Activated CD4-positive, alpha-beta memory T cell treated with anti-CD3 and anti-CD28 coated beads for 36 hours (primary cell): ENCODE measurements at regions of chr5 and their contacts with region 1.

Region 1: GRCh38 chr5:131536211-131536826 is 98.7 kb downstream of the RAPGEF6 start:
- DNase-seq: no peak
- H3K4me3 Mint-ChIP-seq: peak overlapping the region; percentile 31
- H3K27ac Mint-ChIP-seq: peak overlapping the region; percentile 55
- H3K4me1 Mint-ChIP-seq: peaks cover 85% of the 10 kb centered on the region
- H3K27me3 Mint-ChIP-seq: no peaks in the 10 kb centered on the region

Region 2: DNA sequence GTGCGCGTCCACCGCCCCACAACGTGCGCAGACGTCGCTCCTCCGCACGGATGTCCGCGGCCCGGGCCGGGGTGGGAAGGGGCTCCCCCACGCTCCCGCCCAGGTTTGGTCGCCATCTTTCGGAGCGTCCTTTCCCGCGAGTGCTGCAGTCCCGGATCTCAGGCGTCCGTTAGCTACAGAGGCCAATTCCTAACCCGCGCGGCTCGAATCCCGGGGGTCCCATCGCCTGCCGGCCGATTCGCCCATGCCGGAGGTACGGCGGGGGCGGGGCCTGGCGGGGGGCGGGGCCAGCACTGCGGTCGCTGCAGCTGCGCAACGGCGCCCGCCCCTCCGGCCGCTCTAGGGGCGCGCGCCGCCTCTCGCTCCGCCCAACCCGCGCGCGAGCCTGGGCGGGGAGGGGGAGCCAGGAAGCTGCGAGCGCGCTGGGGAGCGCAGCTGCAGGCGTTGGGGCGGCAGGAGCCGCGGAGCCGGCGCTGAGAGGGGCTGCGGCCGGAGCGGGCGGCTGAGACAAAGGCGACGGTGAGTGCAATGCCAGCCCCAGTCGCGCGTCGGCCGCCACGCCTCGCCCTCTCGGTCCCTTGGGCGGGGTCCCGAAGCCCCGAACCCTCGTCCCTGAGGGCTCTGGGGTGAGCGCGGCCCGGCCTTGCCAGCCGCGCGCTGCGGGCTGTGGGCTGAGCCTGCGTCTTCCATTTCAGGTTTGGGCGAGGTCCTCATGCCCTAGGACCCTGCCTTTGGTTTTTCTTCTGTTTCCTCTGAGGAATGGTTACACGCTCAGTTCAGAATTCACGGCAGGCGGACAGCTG is 272.5 kb before region 1 on chr5 and contains the start of gene CDC42SE2:
- CTCF ChIA-PET with region 1: interaction called, 3 read pairs
- POLR2A ChIA-PET with region 1: no interaction called
- intact Hi-C with region 1: loop called (anchors 2 kb)
- DNase-seq: peak; percentile 88
- H3K4me3 Mint-ChIP-seq: peak within 1 kb of the TSS; percentile 89
- H3K27ac Mint-ChIP-seq: peak within 1 kb of the TSS; percentile 95
- H3K4me1 Mint-ChIP-seq: peaks cover 48% of the 10 kb centered on the region
- H3K27me3 Mint-ChIP-seq: no peaks in the 10 kb centered on the region
- total RNA-seq, gene CDC42SE2: 103 to 104 TPM

Region 3: DNA sequence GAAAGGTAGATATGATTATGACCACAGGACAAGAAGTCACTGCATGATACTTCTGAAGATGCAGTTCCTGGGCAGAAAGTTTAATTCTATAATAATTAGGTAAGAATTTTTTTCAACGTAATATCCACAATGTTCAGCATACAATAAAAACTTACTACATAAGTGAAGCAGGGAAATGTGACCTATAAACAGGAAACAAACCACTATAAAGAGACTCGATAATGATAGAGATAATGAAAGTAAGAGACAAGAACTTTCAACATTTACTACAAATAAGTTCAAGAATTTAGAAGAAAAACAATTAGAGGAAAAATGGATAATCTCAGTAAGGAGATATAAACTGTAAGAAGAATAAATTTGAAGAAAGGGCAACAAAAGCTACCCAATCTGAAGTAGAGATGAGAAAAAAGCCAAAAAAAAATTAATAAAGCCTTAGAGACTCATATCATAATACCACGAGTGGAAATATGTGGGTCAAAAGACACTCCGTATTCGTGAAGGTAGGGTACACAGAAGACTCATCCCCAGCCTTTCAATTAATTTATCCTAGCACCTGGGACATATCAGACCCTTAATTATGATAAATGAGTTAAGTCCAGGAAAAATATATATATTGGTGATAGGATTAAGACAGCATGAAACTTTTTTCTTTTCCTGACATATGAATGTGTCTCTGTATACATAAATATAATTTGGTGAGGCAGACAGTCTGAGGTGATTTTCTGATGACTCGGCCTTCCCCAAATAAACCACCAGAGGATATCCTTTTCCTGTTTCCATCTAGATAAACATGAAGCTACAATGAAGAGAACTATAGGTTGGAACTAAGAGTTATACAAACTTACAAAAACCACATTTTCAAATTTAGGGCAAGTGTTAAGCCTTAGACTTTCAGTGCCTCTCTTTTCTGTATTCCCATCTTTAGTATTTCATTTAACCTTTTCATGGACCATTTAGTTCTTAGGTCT is 21.7 kb before region 1 on chr5:
- CTCF ChIA-PET with region 1: interaction called, 3 read pairs
- POLR2A ChIA-PET with region 1: no interaction called
- intact Hi-C with region 1: loop called (anchors 1 kb)
- DNase-seq: no peak
- H3K4me3 Mint-ChIP-seq: peak overlapping the region; percentile 60
- H3K27ac Mint-ChIP-seq: peak overlapping the region; percentile 65
- H3K4me1 Mint-ChIP-seq: peaks cover 54% of the 10 kb centered on the region
- H3K27me3 Mint-ChIP-seq: no peaks in the 10 kb centered on the region

Region 4: GRCh38 chr5:131747180-131748105 is 211.1 kb after region 1 on chr5:
- CTCF ChIA-PET with region 1: no interaction called
- POLR2A ChIA-PET with region 1: no interaction called
- intact Hi-C with region 1: loop called (anchors 5 kb)
- DNase-seq: no peak
- H3K4me3 Mint-ChIP-seq: peak overlapping the region; percentile 35
- H3K27ac Mint-ChIP-seq: peak overlapping the region; percentile 78
- H3K4me1 Mint-ChIP-seq: peaks cover 33% of the 10 kb centered on the region
- H3K27me3 Mint-ChIP-seq: no peaks in the 10 kb centered on the region

Region 5: GRCh38 chr5:132103332-132103951 is 567.1 kb after region 1 on chr5:
- CTCF ChIA-PET with region 1: no interaction called
- POLR2A ChIA-PET with region 1: no interaction called
- intact Hi-C with region 1: loop called (anchors 2 kb)
- DNase-seq: peak; percentile 84
- H3K4me3 Mint-ChIP-seq: peak overlapping the region; percentile 38
- H3K27ac Mint-ChIP-seq: peak overlapping the region; percentile 86
- H3K4me1 Mint-ChIP-seq: peaks cover 74% of the 10 kb centered on the region
- H3K27me3 Mint-ChIP-seq: no peaks in the 10 kb centered on the region